ENCODE measurements at regions of chr7 and their contacts with region 1.

Region 1: DNA sequence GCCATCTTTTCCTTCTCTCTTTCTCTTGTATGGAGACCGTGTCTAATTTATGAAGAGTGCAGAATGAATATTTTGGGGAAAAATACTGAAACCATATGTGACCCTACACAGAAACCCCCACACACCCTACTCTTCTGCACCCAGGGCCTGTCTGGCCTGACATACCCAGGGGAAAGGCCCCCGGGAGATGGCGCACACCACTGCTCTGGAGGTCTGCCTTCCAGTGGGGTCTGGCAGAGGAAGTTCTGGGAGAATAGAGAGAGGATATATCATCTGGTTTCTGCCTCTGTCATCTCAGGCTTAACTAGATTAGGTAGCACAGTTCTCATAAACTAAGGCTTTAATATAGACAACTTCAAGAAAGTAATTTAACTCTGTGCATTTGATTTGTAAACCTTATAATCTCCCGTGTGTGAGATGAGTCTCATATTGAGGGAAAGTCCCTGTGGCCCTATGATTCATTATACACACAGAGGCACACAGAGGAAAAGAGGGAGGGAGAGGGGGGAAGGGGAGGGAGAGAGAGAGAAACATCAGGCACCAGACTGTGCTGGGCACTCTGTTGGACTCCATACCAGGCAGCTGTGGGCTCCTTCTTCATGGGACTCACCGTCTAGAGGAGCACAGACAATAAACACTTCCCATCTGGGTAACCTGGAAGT is 123.3 kb downstream of the AOAH start:
- DNase-seq: peak; percentile 89
- H3K4me3 ChIP-seq: no peak overlapping the region
- H3K27ac ChIP-seq: peak overlapping the region; percentile 33
- H3K4me1 ChIP-seq: peaks cover 36% of the 10 kb centered on the region
- H3K27me3 ChIP-seq: no peaks in the 10 kb centered on the region
- CTCF ChIP-seq: no peak

Region 2: GRCh38 chr7:35906191-35906908 is 694.6 kb before region 1 on chr7:
- CTCF ChIA-PET with region 1: no interaction called
- dilution Hi-C with region 1: no loop called
- in situ Hi-C with region 1: no loop called
- intact Hi-C with region 1: no loop called
- DNase-seq: peak; percentile 54
- H3K4me3 ChIP-seq: no peak overlapping the region
- H3K27ac ChIP-seq: no peak overlapping the region
- H3K4me1 ChIP-seq: peaks cover 10% of the 10 kb centered on the region
- H3K27me3 ChIP-seq: no peaks in the 10 kb centered on the region
- CTCF ChIP-seq: peak; percentile 88 to 90

Region 3: DNA sequence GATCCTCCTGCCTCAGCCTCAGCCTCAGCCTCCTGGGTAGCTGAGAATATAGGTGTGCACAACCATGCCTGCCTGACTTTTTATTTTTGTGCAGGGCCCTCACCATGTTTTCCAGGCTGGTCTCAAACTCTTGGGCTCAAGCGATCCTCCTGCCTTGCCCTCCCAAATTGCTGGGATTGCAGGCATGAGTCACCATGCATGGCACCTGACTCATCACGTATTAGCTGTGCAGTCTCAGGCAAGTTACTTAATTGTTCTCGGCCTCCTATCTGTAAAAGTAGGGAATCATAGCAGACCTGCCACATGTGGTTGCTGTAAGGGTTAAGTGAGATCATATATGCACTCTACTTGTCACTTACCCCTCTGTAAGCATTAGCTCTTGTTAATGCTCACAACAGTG is 94.2 kb before region 1 on chr7:
- CTCF ChIA-PET with region 1: no interaction called
- dilution Hi-C with region 1: loop called (anchors 5 kb)
- in situ Hi-C with region 1: no loop called
- intact Hi-C with region 1: no loop called
- DNase-seq: no peak
- H3K4me3 ChIP-seq: no peak overlapping the region
- H3K27ac ChIP-seq: no peak overlapping the region
- H3K4me1 ChIP-seq: peaks cover 17% of the 10 kb centered on the region
- H3K27me3 ChIP-seq: no peaks in the 10 kb centered on the region
- CTCF ChIP-seq: no peak

Region 4: GRCh38 chr7:36526863-36527548 is 74.0 kb before region 1 on chr7:
- CTCF ChIA-PET with region 1: no interaction called
- dilution Hi-C with region 1: no loop called
- in situ Hi-C with region 1: no loop called
- intact Hi-C with region 1: loop called (anchors 5 kb)
- DNase-seq: peak; percentile 88
- H3K4me3 ChIP-seq: no peak overlapping the region
- H3K27ac ChIP-seq: peak overlapping the region; percentile 22
- H3K4me1 ChIP-seq: peaks cover 25% of the 10 kb centered on the region
- H3K27me3 ChIP-seq: no peaks in the 10 kb centered on the region
- CTCF ChIP-seq: no peak

Region 5: DNA sequence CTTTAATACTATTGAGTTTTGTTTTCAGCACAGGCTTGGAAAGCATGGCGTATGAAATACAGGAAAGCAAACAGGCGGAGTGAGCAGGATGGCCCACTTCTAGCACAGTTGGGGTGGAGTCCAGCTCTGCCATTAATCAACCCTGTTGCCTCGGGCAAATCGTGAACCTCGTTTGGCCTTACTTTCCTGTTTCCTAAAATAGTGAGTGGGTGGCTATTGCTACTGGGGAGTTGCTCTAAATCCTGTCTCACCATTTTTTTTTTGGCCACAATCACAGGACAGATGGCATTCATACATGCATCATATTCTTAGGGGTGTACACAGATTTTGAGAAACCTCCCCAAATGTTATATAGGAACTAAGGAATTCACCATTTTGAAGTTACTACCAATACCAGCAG is 53.6 kb before region 1 on chr7:
- CTCF ChIA-PET with region 1: no interaction called
- dilution Hi-C with region 1: no loop called
- in situ Hi-C with region 1: no loop called
- intact Hi-C with region 1: no loop called
- DNase-seq: no peak
- H3K4me3 ChIP-seq: no peak overlapping the region
- H3K27ac ChIP-seq: no peak overlapping the region
- H3K4me1 ChIP-seq: no peaks in the 10 kb centered on the region
- H3K27me3 ChIP-seq: no peaks in the 10 kb centered on the region
- CTCF ChIP-seq: no peak

Region 6: DNA sequence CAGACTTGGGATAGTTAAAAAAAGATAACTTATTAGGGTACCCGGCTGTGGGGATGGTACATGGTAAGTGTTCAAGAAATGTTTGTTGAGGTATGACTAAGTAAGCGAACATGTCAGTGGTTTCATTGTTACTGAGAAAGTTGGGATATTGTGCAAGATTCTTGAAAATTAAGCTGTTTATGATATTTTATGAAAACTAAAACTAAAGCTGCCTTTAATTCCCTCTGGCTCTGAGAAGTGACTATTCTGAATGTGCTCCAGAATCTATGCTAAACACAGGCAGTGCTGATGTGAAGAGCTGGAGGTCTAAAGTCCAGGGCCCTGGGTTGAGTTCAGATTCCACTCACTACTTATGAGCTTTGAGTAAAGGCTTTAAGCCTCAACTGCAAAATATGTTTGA is 50.4 kb after region 1 on chr7:
- CTCF ChIA-PET with region 1: no interaction called
- dilution Hi-C with region 1: no loop called
- in situ Hi-C with region 1: no loop called
- intact Hi-C with region 1: loop called (anchors 2 kb)
- DNase-seq: peak; percentile 73
- H3K4me3 ChIP-seq: no peak overlapping the region
- H3K27ac ChIP-seq: peak overlapping the region; percentile 52
- H3K4me1 ChIP-seq: peaks cover 23% of the 10 kb centered on the region
- H3K27me3 ChIP-seq: no peaks in the 10 kb centered on the region
- CTCF ChIP-seq: no peak

Region 7: GRCh38 chr7:36659172-36659516 is 58.1 kb after region 1 on chr7:
- CTCF ChIA-PET with region 1: no interaction called
- dilution Hi-C with region 1: no loop called
- in situ Hi-C with region 1: no loop called
- intact Hi-C with region 1: loop called (anchors 2 kb)
- DNase-seq: peak; percentile 97
- H3K4me3 ChIP-seq: no peak overlapping the region
- H3K27ac ChIP-seq: peak overlapping the region; percentile 93
- H3K4me1 ChIP-seq: peaks cover 34% of the 10 kb centered on the region
- H3K27me3 ChIP-seq: no peaks in the 10 kb centered on the region
- CTCF ChIP-seq: no peak

Region 8: GRCh38 chr7:36806891-36807290 is 205.9 kb after region 1 on chr7:
- CTCF ChIA-PET with region 1: no interaction called
- dilution Hi-C with region 1: no loop called
- in situ Hi-C with region 1: no loop called
- intact Hi-C with region 1: no loop called
- DNase-seq: no peak
- H3K4me3 ChIP-seq: no peak overlapping the region
- H3K27ac ChIP-seq: no peak overlapping the region
- H3K4me1 ChIP-seq: peaks cover under 1% of the 10 kb centered on the region
- H3K27me3 ChIP-seq: no peaks in the 10 kb centered on the region
- CTCF ChIP-seq: no peak

Measured in mammary epithelial cell (primary cell).